Cardiac septum (tissue), 1 donor: ENCODE measurements at regions of chr11 and their contacts with region 1.

Region 1: DNA sequence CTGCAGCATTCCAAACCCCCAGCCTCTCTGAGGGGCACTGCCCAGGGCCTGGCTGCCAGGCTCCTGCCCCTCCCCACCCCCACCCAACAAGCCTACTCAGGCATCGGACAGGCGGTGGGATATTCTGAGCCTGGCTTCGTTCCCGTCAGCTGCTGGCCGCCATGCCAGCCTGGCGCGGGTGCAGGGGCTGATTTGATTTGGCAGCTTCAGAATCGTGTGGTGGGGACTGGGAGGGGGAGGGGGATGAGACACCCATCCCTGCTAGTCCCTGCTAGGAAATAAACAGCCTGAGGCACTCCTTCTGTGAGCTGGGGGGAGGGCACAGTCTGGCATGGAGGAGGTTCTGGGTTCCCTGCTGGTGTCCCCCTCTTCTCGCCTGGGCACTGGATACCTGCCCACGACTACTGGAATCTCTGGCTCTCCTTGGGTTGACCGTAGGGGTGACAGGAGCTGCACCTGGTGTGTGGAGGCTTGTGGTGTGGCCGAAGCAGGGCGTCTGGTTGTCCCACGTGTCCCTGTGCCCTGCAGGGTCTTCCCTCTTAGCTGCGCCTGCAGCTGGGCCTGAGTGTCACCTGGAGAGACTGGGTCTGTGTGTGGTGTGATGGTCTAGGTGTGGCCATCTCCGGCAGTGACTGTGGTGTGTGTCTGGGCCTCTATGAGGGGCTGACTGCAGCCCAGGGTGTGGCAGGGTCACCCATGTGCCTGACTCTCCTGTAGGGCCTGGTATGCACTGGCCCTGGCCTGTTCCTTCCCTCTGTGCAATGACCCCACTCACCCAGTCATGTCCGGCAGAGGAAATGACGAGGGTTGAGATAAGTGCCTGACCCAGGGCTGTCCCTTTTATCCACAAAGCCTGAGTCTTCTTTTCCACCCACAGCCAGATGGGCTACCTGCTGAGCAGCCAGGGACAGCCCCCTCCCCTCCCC is 42.2 kb downstream of the PDE2A start:
- DNase-seq: peak; percentile 83

Region 2: GRCh38 chr11:72605973-72606747 is 25.9 kb before region 1 on chr11:
- intact Hi-C with region 1: loop called (anchors 1 kb)
- DNase-seq: no peak

Region 3: GRCh38 chr11:72769680-72770079 is 137.6 kb after region 1 on chr11:
- intact Hi-C with region 1: no loop called
- DNase-seq: no peak

Region 4: GRCh38 chr11:72781313-72782050 is 149.4 kb after region 1 on chr11:
- intact Hi-C with region 1: no loop called
- DNase-seq: no peak

Region 5: GRCh38 chr11:72985645-72986044 is 353.6 kb after region 1 on chr11:
- intact Hi-C with region 1: no loop called
- DNase-seq: no peak